GM10248 (cell line): ENCODE measurements at regions of chr16 and their contacts with region 1.

Region 1: GRCh38 chr16:11700264-11701029 is 32.2 kb downstream of the SNN start:
- DNase-seq: no peak
- CTCF ChIP-seq: no peak

Region 2: GRCh38 chr16:11651796-11652195 is 48.7 kb before region 1 on chr16:
- CTCF ChIA-PET with region 1: no interaction called
- POLR2A ChIA-PET with region 1: no interaction called
- DNase-seq: no peak
- CTCF ChIP-seq: no peak

Region 3: GRCh38 chr16:11665071-11665491 is 35.4 kb before region 1 on chr16:
- CTCF ChIA-PET with region 1: no interaction called
- POLR2A ChIA-PET with region 1: no interaction called
- DNase-seq: no peak
- CTCF ChIP-seq: no peak

Region 4: GRCh38 chr16:11689031-11689761 is 11.3 kb before region 1 on chr16:
- CTCF ChIA-PET with region 1: interaction called, 13 read pairs
- POLR2A ChIA-PET with region 1: no interaction called
- DNase-seq: peak; percentile 70
- CTCF ChIP-seq: no peak

Region 5: DNA sequence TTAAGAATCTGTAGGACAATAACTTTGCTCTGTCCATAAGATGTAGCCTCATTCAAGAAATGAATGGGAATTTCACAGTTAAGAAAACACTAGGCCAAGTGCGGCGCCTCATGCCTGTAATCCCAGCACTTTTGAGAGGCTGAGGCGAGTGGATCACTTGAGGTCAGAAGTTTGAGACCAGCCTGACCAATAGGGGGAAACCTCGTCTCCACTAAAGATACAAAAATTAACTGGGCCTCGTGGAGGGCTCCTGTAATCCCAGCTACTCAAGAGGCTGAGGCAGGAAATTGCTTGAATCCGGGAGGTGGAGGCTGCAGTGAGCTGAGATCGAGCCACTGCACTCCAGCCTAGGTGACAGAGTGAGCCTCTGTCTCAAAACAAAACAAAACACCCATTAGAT is 170.7 kb after region 1 on chr16:
- CTCF ChIA-PET with region 1: no interaction called
- POLR2A ChIA-PET with region 1: no interaction called
- DNase-seq: no peak
- CTCF ChIP-seq: peak; percentile 4